ENCODE measurements at regions of chr12 and their contacts with region 1.

Region 1: DNA sequence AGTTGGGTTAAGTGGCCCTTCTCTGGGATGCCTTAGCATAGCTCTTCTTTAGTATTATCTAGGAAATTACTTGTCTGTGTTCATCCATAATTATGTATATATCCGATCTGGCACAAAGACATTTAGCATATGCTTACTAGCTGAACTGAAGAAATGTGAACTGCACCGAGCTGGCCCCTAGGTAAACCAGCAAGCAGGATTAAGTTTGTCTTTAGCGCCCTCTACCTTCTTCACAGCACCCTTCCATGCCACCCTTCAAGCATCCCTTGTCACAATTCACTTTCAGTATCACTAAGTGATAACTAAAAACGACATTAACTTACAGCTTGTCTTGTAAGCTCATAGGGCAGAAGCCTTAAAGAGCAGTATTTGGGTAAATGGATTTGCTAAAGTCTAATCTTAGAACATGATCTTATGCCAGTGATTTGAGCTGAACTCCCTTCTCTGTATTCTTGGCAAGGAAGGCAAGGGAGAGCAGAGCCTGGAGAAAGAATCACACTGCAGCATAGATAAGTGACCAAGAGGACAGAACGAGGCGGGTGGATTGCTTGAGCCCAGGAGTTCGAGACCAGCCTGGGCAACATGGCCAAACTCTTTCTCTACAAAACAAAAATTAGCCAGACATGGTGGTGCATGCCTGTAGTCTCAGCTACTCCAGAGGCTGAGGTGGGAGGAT is 2.6 kb upstream of the HAL start:
- DNase-seq: no peak
- H3K4me3 ChIP-seq: no peak overlapping the region
- CTCF ChIP-seq: peak; percentile 61

Region 2: GRCh38 chr12:95574799-95575452 is 423.8 kb before region 1 on chr12:
- CTCF ChIA-PET with region 1: interaction called, 12 read pairs
- POLR2A ChIA-PET with region 1: no interaction called
- DNase-seq: no peak
- H3K4me3 ChIP-seq: no peak overlapping the region
- CTCF ChIP-seq: peak; percentile 55

Region 3: GRCh38 chr12:95731519-95731958 is 267.2 kb before region 1 on chr12:
- CTCF ChIA-PET with region 1: no interaction called
- POLR2A ChIA-PET with region 1: no interaction called
- DNase-seq: no peak
- H3K4me3 ChIP-seq: no peak overlapping the region
- CTCF ChIP-seq: no peak

Region 4: DNA sequence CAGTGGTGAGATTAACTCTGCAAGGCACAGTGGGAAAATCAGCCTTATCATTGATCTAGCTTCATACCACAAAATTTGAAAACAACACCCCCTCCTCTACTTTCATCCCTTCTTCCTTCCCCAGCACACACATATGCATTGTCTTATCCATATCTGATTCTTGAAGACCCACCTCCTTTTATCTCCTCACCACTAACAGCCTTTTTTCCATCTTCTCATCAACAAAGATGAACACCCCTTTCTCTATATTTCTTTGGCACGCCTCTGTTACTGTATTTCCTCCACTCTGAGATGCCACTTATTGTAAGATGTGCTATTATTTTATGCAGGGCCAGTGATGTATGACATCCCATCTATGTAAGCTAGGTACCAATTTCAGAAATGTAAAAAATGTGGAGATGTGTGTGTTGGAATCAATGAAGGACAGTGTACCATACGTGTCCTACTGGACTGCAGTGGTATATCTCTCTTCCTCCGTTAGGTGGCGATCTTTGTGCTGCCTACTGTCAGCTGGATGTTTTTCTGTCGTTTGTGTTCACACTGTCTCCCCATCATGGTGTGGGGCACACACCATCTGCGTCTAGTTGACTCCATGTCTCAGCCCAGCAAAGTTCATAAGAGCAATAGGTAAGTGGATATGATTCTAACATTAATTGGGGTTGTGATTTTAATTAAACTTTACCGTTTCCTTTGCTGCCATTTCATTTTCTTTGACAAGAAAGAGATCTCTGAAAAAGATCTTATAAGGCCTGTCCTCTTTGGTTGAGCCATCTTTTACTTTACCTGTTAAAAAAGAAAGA is 80.4 kb before region 1 on chr12:
- CTCF ChIA-PET with region 1: interaction called, 72 read pairs
- POLR2A ChIA-PET with region 1: no interaction called
- DNase-seq: no peak
- H3K4me3 ChIP-seq: no peak overlapping the region
- CTCF ChIP-seq: peak; percentile 75

Region 5: GRCh38 chr12:95980437-95980836 is 18.3 kb before region 1 on chr12:
- CTCF ChIA-PET with region 1: interaction called, 10 read pairs
- POLR2A ChIA-PET with region 1: no interaction called
- DNase-seq: no peak
- H3K4me3 ChIP-seq: no peak overlapping the region
- CTCF ChIP-seq: no peak

Region 6: GRCh38 chr12:96035278-96036236 is 36.8 kb after region 1 on chr12 and contains the start of gene LTA4H:
- CTCF ChIA-PET with region 1: interaction called, 17 read pairs
- POLR2A ChIA-PET with region 1: no interaction called
- DNase-seq: peak; percentile 88
- H3K4me3 ChIP-seq: peak within 1 kb of the TSS; percentile 100
- CTCF ChIP-seq: no peak

Region 7: GRCh38 chr12:96083020-96083719 is 84.4 kb after region 1 on chr12:
- CTCF ChIA-PET with region 1: no interaction called
- POLR2A ChIA-PET with region 1: no interaction called
- DNase-seq: no peak
- H3K4me3 ChIP-seq: no peak overlapping the region
- CTCF ChIP-seq: no peak